PC-9 (cell line): ENCODE measurements at regions of chr3 and their contacts with region 1.

Region 1: DNA sequence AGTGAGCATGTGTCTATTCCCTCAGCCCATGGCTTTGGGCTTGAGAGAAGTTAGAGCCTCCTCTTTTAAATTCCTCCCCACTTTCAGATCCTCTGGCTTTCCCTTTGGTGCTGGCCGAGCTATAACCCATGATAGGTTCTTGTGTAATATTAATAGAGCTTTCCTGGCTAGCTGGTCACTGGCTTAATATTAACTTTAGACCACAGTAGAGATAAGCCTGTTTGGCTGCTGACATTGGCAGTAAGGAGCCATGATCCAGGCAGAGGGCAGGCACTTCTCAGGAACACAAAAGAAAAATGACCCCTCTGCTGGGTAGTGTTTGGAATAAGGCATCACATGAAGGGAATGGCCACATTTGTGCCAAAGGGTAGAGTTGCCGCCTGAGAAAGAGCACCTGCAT is 65.4 kb upstream of the UMPS start:
- DNase-seq: no peak
- H3K4me3 ChIP-seq: no peak overlapping the region
- H3K27ac ChIP-seq: no peak overlapping the region
- H3K4me1 ChIP-seq: no peaks in the 10 kb centered on the region
- H3K27me3 ChIP-seq: no peaks in the 10 kb centered on the region
- CTCF ChIP-seq: no peak

Region 2: DNA sequence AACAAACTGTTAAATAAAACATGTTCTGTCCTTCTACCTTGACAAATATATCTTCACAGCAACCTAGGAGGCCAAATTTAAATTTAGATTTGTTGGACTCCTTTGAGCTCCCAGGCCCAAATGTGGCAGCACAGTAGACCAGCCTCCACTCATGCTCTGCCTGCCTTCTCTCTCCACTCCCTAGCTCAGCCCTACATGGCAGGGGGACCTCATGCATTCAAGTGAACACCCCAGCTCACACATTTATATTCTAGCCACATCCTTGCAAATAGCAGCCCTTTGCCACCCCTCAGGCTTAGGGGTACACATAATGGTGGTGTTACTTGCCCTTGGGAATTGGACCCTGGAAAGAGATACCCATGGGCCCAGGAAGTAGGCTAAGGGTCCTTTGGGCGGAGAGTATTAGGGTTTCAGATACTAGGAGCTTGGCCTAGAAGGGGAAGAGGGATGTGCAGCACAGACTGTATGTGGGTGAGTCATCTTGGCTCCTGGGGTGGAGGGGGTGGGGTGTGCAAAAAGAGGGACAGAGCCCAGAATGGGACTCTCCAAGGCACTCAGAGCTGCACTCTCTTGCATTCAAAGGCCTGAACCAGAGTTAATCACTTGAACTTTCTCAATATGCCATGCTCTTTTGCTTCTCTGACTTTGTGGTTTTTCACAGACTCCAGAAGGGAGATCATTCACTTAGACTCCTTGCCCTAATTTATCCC is 404.4 kb before region 1 on chr3:
- CTCF ChIA-PET with region 1: no interaction called
- POLR2A ChIA-PET with region 1: interaction called, 10 read pairs
- intact Hi-C with region 1: no loop called
- DNase-seq: peak in 1 of 2 experiments; percentile 37
- H3K4me3 ChIP-seq: no peak overlapping the region
- H3K27ac ChIP-seq: no peak overlapping the region
- H3K4me1 ChIP-seq: no peaks in the 10 kb centered on the region; the same call in 1 of the 2 replicates
- H3K27me3 ChIP-seq: 0 out of 2 replicates have a peak, but pooled peaks cover 3% of the 10 kb centered on the region
- CTCF ChIP-seq: no peak

Region 3: GRCh38 chr3:124741027-124741426 is 76.2 kb after region 1 on chr3:
- CTCF ChIA-PET with region 1: no interaction called
- POLR2A ChIA-PET with region 1: interaction called, 12 read pairs
- intact Hi-C with region 1: no loop called
- DNase-seq: no peak
- H3K4me3 ChIP-seq: no peak overlapping the region
- H3K27ac ChIP-seq: no peak overlapping the region
- H3K4me1 ChIP-seq: no peaks in the 10 kb centered on the region
- H3K27me3 ChIP-seq: no peaks in the 10 kb centered on the region
- CTCF ChIP-seq: no peak